ENCODE measurements at regions of chr7 and their contacts with region 1.

Region 1: GRCh38 chr7:39948956-39949928 is 814 bp upstream of the CDK13 start:
- DNase-seq: peak; percentile 98
- ATAC-seq: peak; percentile 82
- H3K4me3 ChIP-seq: peak overlapping the region; percentile 92
- H3K27ac ChIP-seq: peak overlapping the region; percentile 77
- H3K4me1 ChIP-seq: peaks cover 7% of the 10 kb centered on the region
- H3K27me3 ChIP-seq: no peaks in the 10 kb centered on the region
- CTCF ChIP-seq: no peak

Region 2: DNA sequence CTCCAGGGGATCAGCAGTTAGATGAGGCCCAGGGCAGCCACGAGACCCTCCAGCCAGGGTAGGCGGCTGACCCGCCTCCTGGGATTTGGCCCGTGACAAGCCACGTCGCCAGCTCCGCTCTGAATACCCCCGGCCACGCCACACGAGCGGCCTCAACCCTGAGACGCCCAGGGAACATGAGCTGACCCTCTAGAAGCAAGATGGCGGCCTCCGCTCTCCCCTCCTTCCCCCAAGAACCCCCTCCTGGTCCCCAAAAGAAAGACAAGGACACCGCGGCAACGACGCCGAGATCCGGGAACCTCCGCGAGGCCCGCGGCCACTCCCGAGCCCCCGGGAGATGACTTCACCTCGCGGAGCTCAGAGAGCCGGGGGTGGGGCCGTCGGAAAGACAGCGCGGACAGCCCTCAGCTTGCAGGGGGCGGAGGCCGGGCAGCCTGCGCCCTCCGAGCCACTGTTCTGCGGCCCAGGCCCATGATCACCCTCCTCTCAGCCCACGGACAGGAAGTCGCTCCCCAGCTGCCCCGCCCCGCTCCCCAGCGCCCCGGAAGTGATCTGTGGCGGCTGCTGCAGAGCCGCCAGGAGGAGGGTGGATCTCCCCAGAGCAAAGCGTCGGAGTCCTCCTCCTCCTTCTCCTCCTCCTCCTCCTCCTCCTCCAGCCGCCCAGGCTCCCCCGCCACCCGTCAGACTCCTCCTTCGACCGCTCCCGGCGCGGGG is 326.1 kb before region 1 on chr7 and contains the start of gene RALA:
- CTCF ChIA-PET with region 1: no interaction called
- POLR2A ChIA-PET with region 1: no interaction called
- intact Hi-C with region 1: loop called (anchors 5 kb)
- DNase-seq: peak; percentile 87
- ATAC-seq: peak; percentile 92
- H3K4me3 ChIP-seq: peak within 1 kb of the TSS; percentile 83
- H3K27ac ChIP-seq: peak within 1 kb of the TSS; percentile 75
- H3K4me1 ChIP-seq: peaks cover 50% of the 10 kb centered on the region
- H3K27me3 ChIP-seq: no peaks in the 10 kb centered on the region
- CTCF ChIP-seq: no peak
- total RNA-seq, gene RALA: 7.5 and 12.9 TPM in 2 replicates

Region 3: GRCh38 chr7:39888191-39888845 is 60.9 kb before region 1 on chr7:
- CTCF ChIA-PET with region 1: no interaction called
- POLR2A ChIA-PET with region 1: interaction called, 14 read pairs
- intact Hi-C with region 1: no loop called
- DNase-seq: no peak
- ATAC-seq: 0 out of 2 replicates have a peak, but pooled peaks have one; percentile 25
- H3K4me3 ChIP-seq: no peak overlapping the region
- H3K27ac ChIP-seq: no peak overlapping the region
- H3K4me1 ChIP-seq: peaks cover 20% of the 10 kb centered on the region
- H3K27me3 ChIP-seq: no peaks in the 10 kb centered on the region
- CTCF ChIP-seq: no peak

Region 4: GRCh38 chr7:39894904-39895303 is 54.3 kb before region 1 on chr7:
- CTCF ChIA-PET with region 1: interaction called, 4 read pairs
- POLR2A ChIA-PET with region 1: interaction called, 3 read pairs
- intact Hi-C with region 1: loop called (anchors 5 kb)
- DNase-seq: no peak
- ATAC-seq: no peak
- H3K4me3 ChIP-seq: no peak overlapping the region
- H3K27ac ChIP-seq: no peak overlapping the region
- H3K4me1 ChIP-seq: peaks cover 23% of the 10 kb centered on the region
- H3K27me3 ChIP-seq: 0 out of 2 replicates have a peak, but pooled peaks cover 5% of the 10 kb centered on the region
- CTCF ChIP-seq: no peak

Region 5: GRCh38 chr7:40000734-40001315 is 51.6 kb after region 1 on chr7:
- CTCF ChIA-PET with region 1: interaction called, 4 read pairs
- POLR2A ChIA-PET with region 1: no interaction called
- intact Hi-C with region 1: loop called (anchors 5 kb)
- DNase-seq: peak; percentile 10
- ATAC-seq: peak; percentile 78
- H3K4me3 ChIP-seq: no peak overlapping the region
- H3K27ac ChIP-seq: no peak overlapping the region
- H3K4me1 ChIP-seq: peaks cover 4% of the 10 kb centered on the region; the same call in 1 of the 2 replicates
- H3K27me3 ChIP-seq: no peaks in the 10 kb centered on the region
- CTCF ChIP-seq: no peak

Region 6: DNA sequence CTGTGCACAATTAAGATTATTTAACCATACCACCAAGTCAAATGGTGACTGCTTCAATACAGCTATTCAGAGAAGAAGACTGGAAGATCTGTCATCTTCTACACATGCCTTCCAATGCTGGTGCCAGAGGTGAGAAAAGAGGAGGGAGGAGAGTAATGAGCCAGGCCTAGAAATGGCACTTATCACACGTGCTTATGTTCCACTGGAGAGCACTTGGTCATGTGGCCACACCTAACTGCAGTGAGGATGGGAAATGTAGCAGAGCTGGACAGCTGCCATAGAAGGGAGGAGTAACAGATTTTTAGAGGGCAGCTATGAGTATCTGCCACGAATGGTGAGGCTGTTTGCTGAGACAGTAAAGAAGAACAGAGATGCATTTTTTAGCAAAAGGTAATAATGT is 108.0 kb after region 1 on chr7:
- CTCF ChIA-PET with region 1: interaction called, 8 read pairs
- POLR2A ChIA-PET with region 1: no interaction called
- intact Hi-C with region 1: loop called (anchors 1 kb)
- DNase-seq: no peak
- ATAC-seq: no peak
- H3K4me3 ChIP-seq: no peak overlapping the region
- H3K27ac ChIP-seq: no peak overlapping the region
- H3K4me1 ChIP-seq: no peaks in the 10 kb centered on the region
- H3K27me3 ChIP-seq: no peaks in the 10 kb centered on the region
- CTCF ChIP-seq: no peak

Region 7: GRCh38 chr7:40134428-40135316 is 185.4 kb after region 1 on chr7 and contains the starts of genes MPLKIP and SUGCT:
- CTCF ChIA-PET with region 1: no interaction called
- POLR2A ChIA-PET with region 1: no interaction called
- intact Hi-C with region 1: loop called (anchors 2 kb)
- DNase-seq: peak; percentile 90
- ATAC-seq: peak; percentile 85
- H3K4me3 ChIP-seq: peak within 1 kb of the TSS; percentile 96
- H3K27ac ChIP-seq: peak within 1 kb of the TSS; percentile 68
- H3K4me1 ChIP-seq: peaks cover 12% of the 10 kb centered on the region
- H3K27me3 ChIP-seq: no peaks in the 10 kb centered on the region
- CTCF ChIP-seq: peak; percentile 85
- total RNA-seq, gene MPLKIP: 32.2 and 48.7 TPM in 2 replicates
- total RNA-seq, gene SUGCT: 1.7 and 2.9 TPM in 2 replicates

Region 8: GRCh38 chr7:40455485-40455884 is 506.2 kb after region 1 on chr7:
- CTCF ChIA-PET with region 1: no interaction called
- POLR2A ChIA-PET with region 1: no interaction called
- intact Hi-C with region 1: no loop called
- DNase-seq: no peak
- ATAC-seq: no peak
- H3K4me3 ChIP-seq: no peak overlapping the region
- H3K27ac ChIP-seq: no peak overlapping the region
- H3K4me1 ChIP-seq: no peaks in the 10 kb centered on the region
- H3K27me3 ChIP-seq: no peaks in the 10 kb centered on the region
- CTCF ChIP-seq: no peak

Measured in PC-3 (cell line).